SK-N-SH (cell line): ENCODE measurements at regions of chr11 and their contacts with region 1.

Region 1: GRCh38 chr11:131694526-131695424 is 324.4 kb downstream of the NTM start:
- DNase-seq: peak; percentile 86
- H3K4me3 ChIP-seq: no peak overlapping the region; a peak in 1 of 4 replicates
- H3K27ac ChIP-seq: no peak overlapping the region
- H3K4me1 ChIP-seq: peaks cover 0 to 7% of the 10 kb centered on the region in 2 experiments; a peak in 1 of 4 replicates
- H3K27me3 ChIP-seq: no peaks in the 10 kb centered on the region
- CTCF ChIP-seq: peak; percentile 84
- EP300 ChIP-seq: no peak
- RAD21 ChIP-seq: peak; percentile 76

Region 2: DNA sequence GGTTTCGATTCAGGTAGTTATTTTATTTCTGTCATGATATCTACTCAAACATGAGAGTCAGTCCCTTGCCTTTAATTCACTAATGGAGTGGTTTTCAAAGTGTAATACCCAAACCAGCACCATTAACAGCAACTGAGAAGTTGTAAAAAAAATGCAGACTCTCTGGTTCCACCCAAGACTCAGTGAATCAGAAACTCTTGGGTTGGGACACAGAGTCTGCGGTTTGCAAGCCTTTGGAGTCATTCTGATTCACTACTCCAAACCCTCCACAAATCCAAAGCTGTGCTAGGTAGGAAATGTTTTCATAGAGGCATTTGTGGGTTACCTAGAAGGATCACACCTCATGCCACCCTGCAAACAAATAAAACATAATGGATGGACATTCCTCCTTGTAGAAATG is 15.7 kb after region 1 on chr11:
- CTCF ChIA-PET with region 1: interaction called, 49 read pairs
- POLR2A ChIA-PET with region 1: no interaction called
- DNase-seq: no peak
- H3K4me3 ChIP-seq: no peak overlapping the region
- H3K27ac ChIP-seq: no peak overlapping the region
- H3K4me1 ChIP-seq: no peaks in the 10 kb centered on the region
- H3K27me3 ChIP-seq: no peaks in the 10 kb centered on the region; the same call in 1 of the 2 replicates
- CTCF ChIP-seq: no peak
- EP300 ChIP-seq: no peak
- RAD21 ChIP-seq: no peak

Region 3: GRCh38 chr11:131737357-131737756 is 42.6 kb after region 1 on chr11:
- CTCF ChIA-PET with region 1: interaction called, 13 read pairs
- POLR2A ChIA-PET with region 1: no interaction called
- DNase-seq: no peak
- H3K4me3 ChIP-seq: no peak overlapping the region
- H3K27ac ChIP-seq: no peak overlapping the region
- H3K4me1 ChIP-seq: no peaks in the 10 kb centered on the region
- H3K27me3 ChIP-seq: peaks cover 6% of the 10 kb centered on the region; the same call in 1 of the 2 replicates
- CTCF ChIP-seq: peak; percentile 24; the same call in 1 of the 2 replicates
- EP300 ChIP-seq: no peak
- RAD21 ChIP-seq: no peak

Region 4: GRCh38 chr11:131760091-131761061 is 65.6 kb after region 1 on chr11:
- CTCF ChIA-PET with region 1: interaction called, 13 read pairs
- POLR2A ChIA-PET with region 1: no interaction called
- DNase-seq: no peak
- H3K4me3 ChIP-seq: no peak overlapping the region
- H3K27ac ChIP-seq: no peak overlapping the region
- H3K4me1 ChIP-seq: peaks cover 0 to 18% of the 10 kb centered on the region in 2 experiments; a peak in 2 of 4 replicates
- H3K27me3 ChIP-seq: no peaks in the 10 kb centered on the region
- CTCF ChIP-seq: no peak
- EP300 ChIP-seq: no peak
- RAD21 ChIP-seq: no peak

Region 5: DNA sequence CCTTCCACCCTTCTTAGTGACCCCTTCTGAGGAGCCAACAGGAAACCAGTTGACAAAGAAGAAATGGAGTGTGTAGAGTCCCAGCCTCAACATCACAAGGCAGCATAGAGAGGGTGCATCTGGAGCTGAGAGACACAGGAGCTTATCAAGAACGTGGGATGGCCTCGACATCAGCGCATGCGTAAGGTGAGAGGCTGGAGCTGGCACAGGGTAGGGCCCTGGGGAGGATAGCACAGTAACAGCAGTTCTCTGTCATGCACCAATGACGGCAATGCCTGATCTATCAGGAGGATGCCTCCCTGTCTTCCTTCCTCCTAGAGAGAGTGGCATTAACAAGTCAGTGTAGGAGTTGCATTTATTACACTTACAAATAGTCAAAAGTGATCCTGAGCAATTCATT is 101.8 kb after region 1 on chr11:
- CTCF ChIA-PET with region 1: no interaction called
- POLR2A ChIA-PET with region 1: no interaction called
- DNase-seq: no peak
- H3K4me3 ChIP-seq: no peak overlapping the region
- H3K27ac ChIP-seq: no peak overlapping the region
- H3K4me1 ChIP-seq: no peaks in the 10 kb centered on the region
- H3K27me3 ChIP-seq: peaks cover 5% of the 10 kb centered on the region; the same call in 1 of the 2 replicates
- CTCF ChIP-seq: no peak
- EP300 ChIP-seq: no peak
- RAD21 ChIP-seq: no peak

Region 6: DNA sequence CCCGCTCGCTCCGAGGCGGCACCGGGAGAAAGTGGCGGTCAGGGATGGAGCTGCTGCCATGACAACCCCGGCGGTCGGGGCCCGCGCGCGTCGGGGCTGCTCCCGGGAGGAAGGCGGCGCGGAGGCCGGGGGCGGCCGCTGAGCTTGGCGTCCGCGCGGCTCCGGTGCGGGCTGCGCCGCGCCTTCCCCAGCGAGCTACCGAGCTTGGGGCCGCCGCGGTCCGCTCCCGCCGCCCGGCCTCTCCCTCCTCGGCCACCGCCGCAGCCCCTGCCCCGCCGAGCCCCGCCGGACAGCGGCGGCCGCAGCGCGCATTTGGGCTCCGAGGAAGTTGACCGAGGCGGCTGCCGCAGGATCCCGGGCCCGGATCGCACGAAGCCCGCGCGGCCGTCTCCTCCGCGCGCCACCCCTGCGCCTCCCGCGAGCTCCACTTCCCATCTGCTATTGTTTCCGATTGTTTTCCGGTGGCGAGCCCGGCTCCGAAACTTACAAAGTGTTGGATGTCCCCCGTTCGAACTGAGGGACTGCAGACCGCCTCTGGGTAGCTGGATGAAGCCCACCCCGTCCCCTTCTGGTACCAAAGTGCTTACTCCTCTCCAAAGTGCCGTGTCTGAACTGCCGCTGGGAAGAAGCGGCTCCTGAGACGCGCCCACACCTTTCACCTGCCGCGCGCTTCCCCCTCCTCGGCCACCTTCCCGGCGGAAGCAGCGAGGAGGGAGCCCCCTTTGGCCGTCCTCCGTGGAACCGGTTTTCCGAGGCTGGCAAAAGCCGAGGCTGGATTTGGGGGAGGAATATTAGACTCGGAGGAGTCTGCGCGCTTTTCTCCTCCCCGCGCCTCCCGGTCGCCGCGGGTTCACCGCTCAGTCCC is 216.0 kb after region 1 on chr11:
- CTCF ChIA-PET with region 1: interaction called, 12 read pairs
- POLR2A ChIA-PET with region 1: no interaction called
- DNase-seq: peak; percentile 73
- H3K4me3 ChIP-seq: peak overlapping the region; percentile 60 to 95
- H3K27ac ChIP-seq: peak overlapping the region in 1 of 2 experiments; percentile 80; a peak in 2 of 4 replicates
- H3K4me1 ChIP-seq: peaks cover 3 to 42% of the 10 kb centered on the region in 2 experiments; a peak in 2 of 4 replicates
- H3K27me3 ChIP-seq: no peaks in the 10 kb centered on the region
- CTCF ChIP-seq: no peak
- EP300 ChIP-seq: no peak
- RAD21 ChIP-seq: no peak

Region 7: DNA sequence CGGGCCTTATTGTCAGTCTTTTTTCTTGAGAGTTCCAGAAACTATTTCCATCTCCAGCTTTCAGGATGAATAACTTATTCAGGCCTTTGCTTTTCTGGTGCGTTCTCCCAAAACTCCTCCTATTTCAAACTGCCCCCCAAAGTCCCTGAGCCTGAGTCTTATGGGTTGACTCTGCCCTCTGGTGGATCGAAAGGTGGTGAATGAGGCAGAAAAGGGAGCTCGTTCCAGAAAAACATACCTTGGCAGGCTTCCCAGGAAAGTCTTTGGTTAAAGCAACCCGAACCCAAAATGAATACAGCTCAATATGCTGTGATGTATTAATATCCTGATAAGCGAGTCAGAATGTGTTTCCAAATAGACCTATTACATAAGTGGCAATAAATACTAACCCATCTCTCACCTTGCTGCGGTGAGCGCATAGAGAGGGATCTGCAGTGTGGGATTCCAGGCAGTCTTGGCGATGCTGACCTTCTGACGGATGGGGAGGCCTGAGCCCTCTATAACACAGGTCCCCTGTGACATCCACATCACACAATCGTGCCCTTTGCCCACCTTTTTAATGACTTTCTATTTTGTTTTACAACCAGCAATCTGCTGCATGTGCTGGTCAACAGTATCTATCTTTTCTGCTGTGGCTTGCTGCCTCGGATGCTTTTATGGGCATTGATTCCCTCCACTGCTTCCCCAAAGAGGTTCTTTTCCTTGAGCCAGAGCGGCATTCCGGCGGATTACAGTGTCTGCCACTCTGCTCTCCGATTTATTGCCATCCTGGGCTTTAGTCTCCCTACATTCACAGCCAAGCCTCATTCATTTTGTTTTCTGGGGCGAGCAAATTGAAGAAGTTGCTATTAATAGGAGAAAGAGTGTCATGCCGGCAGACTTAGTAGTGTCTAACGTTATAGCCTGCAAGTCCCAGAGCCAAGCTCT is 432.5 kb after region 1 on chr11:
- CTCF ChIA-PET with region 1: interaction called, 14 read pairs
- POLR2A ChIA-PET with region 1: no interaction called
- DNase-seq: peak; percentile 66
- H3K4me3 ChIP-seq: no peak overlapping the region
- H3K27ac ChIP-seq: peak overlapping the region in 1 of 2 experiments; percentile 69; a peak in 1 of 4 replicates
- H3K4me1 ChIP-seq: peaks cover 0 to 10% of the 10 kb centered on the region in 2 experiments; a peak in 2 of 4 replicates
- H3K27me3 ChIP-seq: no peaks in the 10 kb centered on the region
- CTCF ChIP-seq: peak; percentile 89
- EP300 ChIP-seq: no peak
- RAD21 ChIP-seq: peak; percentile 82

Region 8: GRCh38 chr11:132177106-132177505 is 482.3 kb after region 1 on chr11:
- CTCF ChIA-PET with region 1: no interaction called
- POLR2A ChIA-PET with region 1: no interaction called
- DNase-seq: no peak
- H3K4me3 ChIP-seq: no peak overlapping the region
- H3K27ac ChIP-seq: no peak overlapping the region
- H3K4me1 ChIP-seq: no peaks in the 10 kb centered on the region
- H3K27me3 ChIP-seq: no peaks in the 10 kb centered on the region
- CTCF ChIP-seq: no peak
- EP300 ChIP-seq: no peak
- RAD21 ChIP-seq: no peak